ENCODE measurements at regions of chr11 and their contacts with region 1.

Region 1: DNA sequence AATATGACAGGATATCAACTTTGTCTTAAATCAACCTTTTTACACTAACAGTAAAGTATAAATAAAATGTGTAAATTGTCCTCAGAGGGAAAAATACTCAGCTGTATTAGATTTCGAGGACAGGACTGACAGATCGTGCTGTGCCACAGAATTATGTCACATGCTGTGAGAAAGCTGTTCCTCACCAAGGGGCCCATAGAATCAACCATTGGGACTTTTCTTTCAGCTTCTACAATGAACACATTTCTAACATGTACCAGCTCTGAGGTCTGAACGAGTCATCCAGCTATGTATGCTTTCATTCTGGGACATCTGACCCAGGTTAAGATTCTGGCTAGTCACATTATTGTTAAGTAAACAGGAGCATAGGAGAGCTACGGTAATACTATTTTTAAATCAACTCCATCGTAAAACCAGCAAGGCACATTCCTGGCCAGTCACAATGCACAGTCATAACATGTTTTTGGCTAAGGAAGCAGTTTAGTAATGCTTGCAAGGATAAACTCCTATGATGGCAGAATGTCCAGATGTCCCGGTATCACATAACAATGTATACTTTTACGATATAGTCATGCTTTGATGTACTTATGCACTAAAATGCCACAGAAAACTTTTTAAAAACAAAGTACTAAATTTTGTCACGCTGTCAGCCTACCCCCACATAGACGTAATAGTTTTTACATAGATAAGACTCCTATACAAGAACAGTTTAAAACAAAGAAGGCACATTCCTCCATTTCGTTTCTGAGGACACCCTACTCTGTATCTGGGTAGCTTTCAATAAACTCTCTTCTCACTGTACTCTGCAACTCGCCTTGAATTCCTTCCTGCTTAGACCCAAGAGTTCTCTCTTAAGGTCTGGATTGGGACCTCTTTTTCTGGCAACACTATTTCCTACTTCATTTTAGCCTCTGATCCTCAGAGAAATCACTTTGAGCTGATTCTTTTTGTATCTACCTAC is 27.4 kb downstream of the ZNF214 start:
- DNase-seq: peak; percentile 94
- H3K4me3 ChIP-seq: no peak overlapping the region; the same call in 1 of the 2 replicates
- H3K27ac ChIP-seq: peak overlapping the region; percentile 95
- H3K27me3 ChIP-seq: no peaks in the 10 kb centered on the region
- CTCF ChIP-seq: no peak

Region 2: GRCh38 chr11:6968816-6969215 is 23.9 kb before region 1 on chr11:
- CTCF ChIA-PET with region 1: no interaction called
- POLR2A ChIA-PET with region 1: no interaction called
- DNase-seq: no peak
- H3K4me3 ChIP-seq: no peak overlapping the region
- H3K27ac ChIP-seq: no peak overlapping the region
- H3K27me3 ChIP-seq: no peaks in the 10 kb centered on the region
- CTCF ChIP-seq: no peak

Region 3: DNA sequence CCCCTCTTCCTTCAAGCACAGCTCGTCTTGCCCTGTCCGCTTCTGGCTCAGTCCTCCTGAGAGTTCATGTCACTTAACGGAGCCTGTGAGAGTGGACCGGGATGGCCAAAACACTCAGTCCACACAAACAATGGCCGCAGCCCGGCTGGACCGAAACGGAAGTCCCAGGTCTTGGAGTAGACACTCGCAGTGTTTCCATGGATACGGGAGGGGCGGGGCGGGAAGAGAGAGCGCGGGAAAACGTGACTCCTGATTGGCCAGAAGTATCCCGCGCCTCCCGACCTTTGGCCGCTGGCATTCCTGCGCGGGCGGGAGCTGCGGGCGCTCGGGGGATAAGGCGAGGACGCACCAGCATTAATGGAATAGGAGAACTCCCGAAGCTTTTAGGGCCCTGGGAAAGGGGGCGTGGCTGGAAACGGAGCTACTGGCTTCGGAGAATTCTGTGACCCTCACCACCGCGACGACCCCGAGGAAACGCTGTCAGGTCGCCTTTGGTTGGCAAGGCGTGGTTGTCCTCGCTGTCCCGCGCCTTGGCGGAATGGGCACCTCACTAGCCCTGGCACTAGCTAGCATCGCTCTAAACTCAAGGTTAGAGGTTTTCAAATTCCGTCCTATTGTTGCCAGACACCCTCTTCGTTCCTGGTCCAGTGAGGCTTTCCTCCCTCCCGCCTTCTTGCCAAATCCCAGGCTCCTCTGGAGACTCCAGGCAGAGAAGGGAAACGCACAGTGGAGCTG is 27.6 kb after region 1 on chr11 and contains the starts of genes NLRP14 and ZNF214:
- CTCF ChIA-PET with region 1: interaction called, 5 read pairs
- POLR2A ChIA-PET with region 1: interaction called, 17 read pairs
- DNase-seq: peak; percentile 83
- H3K4me3 ChIP-seq: peak within 1 kb of the TSS; percentile 90
- H3K27ac ChIP-seq: peak within 1 kb of the TSS; percentile 80
- H3K27me3 ChIP-seq: no peaks in the 10 kb centered on the region
- CTCF ChIP-seq: no peak
- polyA plus RNA-seq, gene NLRP14: 0.02 and 0.06 TPM in 2 replicates
- polyA plus RNA-seq, gene ZNF214: 1.9 and 3.4 TPM in 2 replicates

Region 4: DNA sequence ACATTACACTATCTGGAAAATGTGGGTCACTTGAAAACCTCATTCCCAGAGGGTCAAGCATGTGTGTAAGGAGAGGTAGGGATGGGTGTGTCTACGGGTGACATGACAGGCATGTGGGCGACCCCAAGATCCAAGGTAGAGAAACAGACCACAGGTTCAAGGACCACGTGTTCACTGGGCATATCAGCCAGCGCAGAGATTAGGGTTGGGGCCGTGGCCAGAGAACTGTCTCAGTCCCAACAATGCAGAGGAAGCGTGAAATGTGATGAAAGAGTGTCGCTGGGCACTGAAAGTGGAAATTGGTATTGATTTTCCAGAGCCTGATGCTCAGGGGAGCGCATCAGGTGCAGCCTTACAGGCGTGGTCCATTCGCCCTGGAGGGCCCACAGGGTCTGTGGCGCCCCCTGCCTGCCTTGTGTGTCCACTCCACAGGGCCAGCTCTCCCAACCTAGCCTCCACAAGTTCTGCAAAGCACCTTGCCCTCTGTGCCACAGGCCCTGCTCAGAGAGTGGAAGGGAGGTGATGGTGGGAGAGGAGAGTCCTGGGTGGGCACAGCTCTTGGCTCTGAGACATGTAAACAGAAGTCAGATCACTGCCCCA is 1325.7 kb after region 1 on chr11:
- CTCF ChIA-PET with region 1: no interaction called
- POLR2A ChIA-PET with region 1: no interaction called
- DNase-seq: no peak
- H3K4me3 ChIP-seq: no peak overlapping the region
- H3K27ac ChIP-seq: no peak overlapping the region
- H3K27me3 ChIP-seq: peaks cover 38% of the 10 kb centered on the region
- CTCF ChIP-seq: no peak

Measured in AG04450 (cell line).